ENCODE measurements at regions of chr14 and their contacts with region 1.

Region 1: DNA sequence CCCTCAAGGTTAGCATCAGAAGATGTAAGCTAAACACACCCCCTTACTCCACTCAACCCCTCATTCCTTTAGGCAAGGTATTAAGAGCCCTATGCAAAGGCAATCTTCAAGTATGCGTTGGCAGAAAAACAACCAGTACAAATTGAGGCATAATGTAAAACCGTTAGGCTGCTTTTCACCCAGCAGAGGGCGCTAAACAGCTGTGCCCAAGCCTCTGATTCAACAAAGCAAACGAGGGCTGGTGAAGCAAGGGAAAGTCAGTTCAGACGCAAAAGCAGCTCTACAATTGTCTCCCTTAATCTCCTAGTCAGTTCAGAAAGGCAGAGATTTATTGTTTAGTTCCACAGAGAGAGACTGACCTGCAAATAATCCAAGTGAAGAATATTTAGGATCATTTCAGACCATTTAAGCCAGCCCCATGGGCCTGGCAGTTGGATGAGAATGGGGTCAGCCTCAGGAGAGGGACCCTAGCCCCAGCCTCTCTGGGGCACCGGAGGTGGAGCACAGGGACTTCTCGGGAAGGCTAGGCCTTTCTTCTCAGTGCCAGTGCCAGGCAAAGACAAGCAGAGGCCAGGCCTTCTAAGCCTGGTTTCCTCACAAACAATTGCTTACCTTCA is 23.5 kb downstream of the DCAF5 start:
- DNase-seq: peak; percentile 46 to 88 (median 77)
- ATAC-seq: peak; percentile 90
- H3K4me3 ChIP-seq: no peak overlapping the region
- H3K4me3 Mint-ChIP-seq: no peak overlapping the region
- H3K27ac ChIP-seq: no peak overlapping the region
- H3K27ac Mint-ChIP-seq: peak overlapping the region; percentile 89
- H3K4me1 ChIP-seq: peaks cover 22% of the 10 kb centered on the region
- H3K4me1 Mint-ChIP-seq: peaks cover 79% of the 10 kb centered on the region
- H3K27me3 ChIP-seq: no peaks in the 10 kb centered on the region
- H3K27me3 Mint-ChIP-seq: no peaks in the 10 kb centered on the region
- CTCF ChIP-seq: peak; percentile 92

Region 2: GRCh38 chr14:69107407-69108003 is 21.9 kb before region 1 on chr14:
- CTCF ChIA-PET with region 1: interaction called, 17 read pairs
- POLR2A ChIA-PET with region 1: no interaction called
- intact Hi-C with region 1: no loop called
- DNase-seq: peak in 5 of 9 experiments; percentile 20 to 66 (median 53)
- ATAC-seq: peak; percentile 62
- H3K4me3 ChIP-seq: no peak overlapping the region
- H3K4me3 Mint-ChIP-seq: no peak overlapping the region
- H3K27ac ChIP-seq: no peak overlapping the region
- H3K27ac Mint-ChIP-seq: no peak overlapping the region
- H3K4me1 ChIP-seq: no peaks in the 10 kb centered on the region
- H3K4me1 Mint-ChIP-seq: no peaks in the 10 kb centered on the region
- H3K27me3 ChIP-seq: no peaks in the 10 kb centered on the region
- H3K27me3 Mint-ChIP-seq: no peaks in the 10 kb centered on the region
- CTCF ChIP-seq: peak; percentile 36

Region 3: DNA sequence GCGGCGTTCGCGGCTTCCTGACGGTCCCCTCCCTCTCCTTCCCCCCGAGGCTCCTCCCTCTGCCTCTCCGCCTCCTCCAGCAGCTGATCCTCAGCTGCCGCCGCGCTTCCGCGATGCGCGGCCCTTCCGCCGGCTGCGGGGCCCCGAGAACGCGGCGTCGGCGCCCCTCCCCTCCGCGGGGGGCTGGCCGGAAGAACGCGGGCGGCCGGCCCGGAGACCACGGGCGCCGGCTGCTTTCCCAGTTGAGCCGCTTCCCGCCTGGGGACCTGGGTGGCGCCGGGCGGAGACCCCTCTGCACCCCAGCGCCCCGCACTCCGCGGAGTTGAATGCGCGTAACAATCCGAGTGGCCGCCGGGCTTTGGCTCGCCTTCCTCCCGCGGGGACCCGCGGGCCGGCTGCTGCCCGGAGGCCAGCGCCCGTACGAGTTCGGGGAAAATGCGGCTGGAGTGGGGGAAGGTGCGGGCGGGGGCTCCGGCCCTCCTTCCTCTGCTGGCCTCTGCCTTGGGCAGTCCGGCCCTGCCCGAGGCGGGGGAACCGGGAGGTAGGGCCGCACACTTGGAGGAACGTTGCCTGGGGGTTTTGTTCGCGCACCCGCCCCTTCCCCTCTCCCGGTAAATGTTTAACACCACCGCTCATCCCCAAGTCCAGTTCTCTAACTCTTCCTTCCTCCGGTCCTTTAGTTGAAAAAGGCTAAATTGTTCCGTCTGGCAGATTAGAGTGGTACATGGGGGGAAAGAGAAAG is 23.9 kb after region 1 on chr14:
- CTCF ChIA-PET with region 1: interaction called, 42 read pairs
- POLR2A ChIA-PET with region 1: interaction called, 28 read pairs
- intact Hi-C with region 1: loop called (anchors 1 to 2 kb)
- DNase-seq: peak; percentile 87 to 98 (median 93)
- ATAC-seq: peak; percentile 91
- H3K4me3 ChIP-seq: peak overlapping the region; percentile 93 to 95
- H3K4me3 Mint-ChIP-seq: peak overlapping the region; percentile 89
- H3K27ac ChIP-seq: peak overlapping the region; percentile 51 to 69
- H3K27ac Mint-ChIP-seq: peak overlapping the region; percentile 95
- H3K4me1 ChIP-seq: peaks cover 36% of the 10 kb centered on the region
- H3K4me1 Mint-ChIP-seq: peaks cover 33% of the 10 kb centered on the region
- H3K27me3 ChIP-seq: no peaks in the 10 kb centered on the region
- H3K27me3 Mint-ChIP-seq: no peaks in the 10 kb centered on the region
- CTCF ChIP-seq: no peak

Region 4: GRCh38 chr14:69214393-69214792 is 85.0 kb after region 1 on chr14:
- CTCF ChIA-PET with region 1: interaction called, 3 read pairs
- POLR2A ChIA-PET with region 1: no interaction called
- intact Hi-C with region 1: loop called in 1 of 2 experiments (anchors 2 kb)
- DNase-seq: no peak
- ATAC-seq: no peak
- H3K4me3 ChIP-seq: no peak overlapping the region
- H3K4me3 Mint-ChIP-seq: no peak overlapping the region
- H3K27ac ChIP-seq: no peak overlapping the region
- H3K27ac Mint-ChIP-seq: no peak overlapping the region
- H3K4me1 ChIP-seq: no peaks in the 10 kb centered on the region
- H3K4me1 Mint-ChIP-seq: no peaks in the 10 kb centered on the region
- H3K27me3 ChIP-seq: no peaks in the 10 kb centered on the region
- H3K27me3 Mint-ChIP-seq: no peaks in the 10 kb centered on the region
- CTCF ChIP-seq: no peak

Region 5: DNA sequence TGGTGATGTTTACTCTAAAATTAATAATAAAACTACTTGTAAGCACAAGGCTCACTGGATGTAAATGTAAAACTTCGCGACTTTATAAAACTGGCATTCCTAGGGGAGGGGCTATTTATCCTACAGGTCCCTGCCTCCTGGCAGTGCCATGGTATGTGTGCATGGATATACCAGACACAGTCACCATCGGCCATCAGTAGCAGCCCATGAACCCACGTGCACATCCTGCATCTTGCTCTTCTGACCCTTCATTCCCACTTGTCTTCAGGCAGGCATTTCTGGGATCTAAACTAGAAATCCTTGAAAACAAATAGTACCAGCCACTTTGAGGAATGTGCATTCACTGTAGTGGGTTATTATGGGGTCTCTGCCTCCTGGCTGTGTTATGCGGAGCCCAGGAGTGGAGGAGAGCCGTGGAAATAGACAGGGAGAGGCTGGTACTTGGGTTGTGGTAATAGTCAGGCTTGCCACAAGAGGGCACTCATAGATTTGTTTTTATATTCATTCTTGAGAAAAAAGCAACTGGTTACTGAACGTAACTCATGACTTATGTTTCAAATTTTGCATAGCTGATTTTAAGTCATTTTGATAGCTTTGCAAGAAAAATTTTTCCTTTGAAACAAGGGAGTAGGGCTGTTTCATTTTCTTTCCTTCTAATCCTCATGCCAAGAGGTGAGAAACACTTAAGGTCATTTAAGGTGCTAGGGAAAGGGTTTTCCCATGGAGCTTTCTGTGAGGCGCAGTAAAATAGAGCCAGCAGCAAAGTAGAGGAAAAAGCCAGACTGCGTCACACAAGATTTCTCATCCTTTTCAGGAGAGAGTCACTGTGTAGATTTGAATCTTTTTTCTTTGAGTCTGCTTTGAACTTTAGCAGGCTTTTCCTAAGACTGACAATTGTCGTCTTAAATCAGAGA is 113.2 kb after region 1 on chr14:
- CTCF ChIA-PET with region 1: interaction called, 56 read pairs
- POLR2A ChIA-PET with region 1: interaction called, 3 read pairs
- intact Hi-C with region 1: loop called (anchors 1 kb)
- DNase-seq: peak; percentile 15 to 71 (median 47)
- ATAC-seq: peak; percentile 69
- H3K4me3 ChIP-seq: no peak overlapping the region
- H3K4me3 Mint-ChIP-seq: no peak overlapping the region
- H3K27ac ChIP-seq: no peak overlapping the region
- H3K27ac Mint-ChIP-seq: no peak overlapping the region
- H3K4me1 ChIP-seq: no peaks in the 10 kb centered on the region
- H3K4me1 Mint-ChIP-seq: peaks cover 3% of the 10 kb centered on the region
- H3K27me3 ChIP-seq: no peaks in the 10 kb centered on the region
- H3K27me3 Mint-ChIP-seq: no peaks in the 10 kb centered on the region
- CTCF ChIP-seq: peak; percentile 86

Region 6: DNA sequence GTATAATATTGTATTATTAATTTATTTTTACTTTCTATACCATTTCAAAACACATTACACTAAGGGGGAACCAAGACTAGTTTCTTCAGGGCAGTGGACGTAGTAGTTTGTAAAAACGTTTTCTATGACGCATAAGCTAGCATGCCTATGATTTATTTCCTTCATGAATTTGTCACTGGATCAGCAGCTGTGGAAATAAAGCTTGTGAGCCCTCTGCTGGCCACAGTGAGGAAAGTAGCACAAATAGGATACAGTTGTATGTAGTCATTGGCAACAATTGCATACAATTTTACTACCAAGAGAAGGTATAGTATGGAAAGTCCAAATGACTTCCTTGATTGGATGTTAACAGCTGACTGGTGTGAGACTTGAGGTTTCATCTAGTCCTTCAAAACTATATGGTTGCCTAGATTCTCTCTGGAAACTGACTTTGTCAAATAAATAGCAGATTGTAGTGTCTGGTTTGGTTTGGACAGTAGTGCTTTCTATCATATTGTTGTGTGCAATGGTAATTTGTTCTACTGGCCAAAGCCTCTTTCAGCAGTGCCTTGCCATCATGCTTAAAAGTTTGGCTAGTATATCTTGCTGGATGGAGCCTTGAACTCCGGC is 330.8 kb after region 1 on chr14:
- CTCF ChIA-PET with region 1: interaction called, 5 read pairs
- POLR2A ChIA-PET with region 1: no interaction called
- intact Hi-C with region 1: loop called (anchors 1 kb)
- DNase-seq: peak; percentile 7 to 70 (median 42)
- ATAC-seq: peak; percentile 73
- H3K4me3 ChIP-seq: no peak overlapping the region
- H3K4me3 Mint-ChIP-seq: no peak overlapping the region
- H3K27ac ChIP-seq: no peak overlapping the region
- H3K27ac Mint-ChIP-seq: no peak overlapping the region
- H3K4me1 ChIP-seq: no peaks in the 10 kb centered on the region
- H3K4me1 Mint-ChIP-seq: no peaks in the 10 kb centered on the region
- H3K27me3 ChIP-seq: no peaks in the 10 kb centered on the region
- H3K27me3 Mint-ChIP-seq: no peaks in the 10 kb centered on the region
- CTCF ChIP-seq: peak; percentile 72

Measured in CD8-positive, alpha-beta T cell (primary cell).